K562 (cell line): ENCODE measurements at regions of chr14 and their contacts with region 1.

Region 1: GRCh38 chr14:68297876-68298469 is 478.4 kb downstream of the RAD51B start:
- DNase-seq: no peak
- ATAC-seq: no peak
- H3K4me3 ChIP-seq: no peak overlapping the region
- H3K27ac ChIP-seq: no peak overlapping the region
- H3K4me1 ChIP-seq: peaks cover 0 to 31% of the 10 kb centered on the region in 2 experiments; a peak in 2 of 5 replicates
- H3K27me3 ChIP-seq: no peaks in the 10 kb centered on the region
- CTCF ChIP-seq: peak in 2 of 3 experiments; percentile 6 to 20; a peak in 2 of 6 replicates
- EP300 ChIP-seq: no peak
- POLR2A ChIP-seq: no peak
- RAD21 ChIP-seq: peak in 1 of 2 experiments; percentile 48; a peak in 2 of 4 replicates

Region 2: GRCh38 chr14:67951529-67952135 is 346.3 kb before region 1 on chr14:
- CTCF ChIA-PET with region 1: no interaction called
- POLR2A ChIA-PET with region 1: no interaction called
- in situ Hi-C with region 1: no loop called
- intact Hi-C with region 1: no loop called
- DNase-seq: no peak
- ATAC-seq: no peak
- H3K4me3 ChIP-seq: no peak overlapping the region
- H3K27ac ChIP-seq: no peak overlapping the region
- H3K4me1 ChIP-seq: no peaks in the 10 kb centered on the region
- H3K27me3 ChIP-seq: no peaks in the 10 kb centered on the region
- CTCF ChIP-seq: no peak
- EP300 ChIP-seq: no peak
- POLR2A ChIP-seq: no peak
- RAD21 ChIP-seq: no peak

Region 3: GRCh38 chr14:68408680-68409079 is 110.7 kb after region 1 on chr14:
- CTCF ChIA-PET with region 1: no interaction called
- POLR2A ChIA-PET with region 1: no interaction called
- in situ Hi-C with region 1: no loop called
- intact Hi-C with region 1: loop called (anchors 10 kb)
- DNase-seq: no peak
- ATAC-seq: peak; percentile 70; the same call in 2 of the 3 replicates
- H3K4me3 ChIP-seq: no peak overlapping the region
- H3K27ac ChIP-seq: no peak overlapping the region
- H3K4me1 ChIP-seq: peaks cover 0 to 13% of the 10 kb centered on the region in 2 experiments; a peak in 4 of 5 replicates
- H3K27me3 ChIP-seq: no peaks in the 10 kb centered on the region
- CTCF ChIP-seq: peak in 2 of 3 experiments; percentile 27 to 39; a peak in 3 of 6 replicates
- EP300 ChIP-seq: no peak
- POLR2A ChIP-seq: no peak
- RAD21 ChIP-seq: peak; percentile 26 to 55; a peak in 3 of 4 replicates